Transverse colon (tissue), 4 donors: ENCODE measurements at regions of chr22 and their contacts with region 1.

Region 1: GRCh38 chr22:36144886-36145541 is 15.5 kb downstream of the APOL3 start:
- DNase-seq: peak; percentile 52
- H3K4me3 ChIP-seq: no peak overlapping the region
- H3K27ac ChIP-seq: peak overlapping the region in 1 of 4 donors; percentile 6
- H3K4me1 ChIP-seq: peaks cover 0 to 11% (median 3%) of the 10 kb centered on the region in 4 donors
- H3K27me3 ChIP-seq: no peaks in the 10 kb centered on the region
- CTCF ChIP-seq: peak; percentile 64 to 72 (median 70)
- EP300 ChIP-seq: no peak
- POLR2A ChIP-seq: no peak

Region 2: DNA sequence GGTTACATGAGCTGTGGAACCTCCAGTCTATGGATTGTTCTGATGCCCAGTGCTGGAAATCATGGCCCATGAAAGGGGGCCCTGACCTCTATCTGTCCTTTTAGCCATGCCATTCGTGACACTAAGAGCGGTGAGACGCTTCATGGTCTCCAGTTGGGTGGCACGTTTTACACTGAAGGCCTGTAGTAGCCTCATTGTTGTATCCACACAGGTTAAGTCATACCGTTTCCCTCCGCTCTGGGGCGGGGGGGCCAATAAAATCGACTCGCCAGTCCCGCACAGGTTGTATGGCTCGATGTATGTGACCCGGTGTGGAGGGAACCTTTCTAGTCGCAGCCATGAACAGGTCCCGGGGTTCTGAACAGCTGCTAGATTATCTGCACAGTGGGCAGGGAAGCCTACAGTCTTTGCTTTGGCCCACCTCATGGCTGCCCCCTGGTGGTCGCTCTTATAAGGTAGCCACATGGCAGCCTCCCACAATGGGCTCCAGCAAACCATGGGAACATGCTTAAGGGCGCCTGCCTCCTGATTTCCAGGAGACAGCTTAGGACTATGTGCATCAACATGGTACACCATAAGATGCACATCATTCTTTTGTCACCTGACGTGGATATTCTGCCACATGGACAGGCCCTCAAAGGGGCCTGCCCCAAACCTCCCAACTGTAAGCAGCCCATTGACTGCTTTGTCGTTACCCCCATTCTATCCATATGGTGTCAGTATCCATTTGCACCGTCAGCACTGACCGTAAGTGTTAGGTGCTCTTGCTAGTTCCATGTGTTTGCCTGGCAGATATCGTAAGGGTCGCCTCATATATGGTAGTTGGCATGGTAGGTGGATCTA is 35.2 kb after region 1 on chr22:
- in situ Hi-C with region 1: loop called in 1 of 4 experiments (anchors 5 kb)
- intact Hi-C with region 1: loop called (anchors 2 kb)
- DNase-seq: peak; percentile 87
- H3K4me3 ChIP-seq: no peak overlapping the region
- H3K27ac ChIP-seq: no peak overlapping the region
- H3K4me1 ChIP-seq: no peaks in the 10 kb centered on the region
- H3K27me3 ChIP-seq: no peaks in the 10 kb centered on the region
- CTCF ChIP-seq: peak; percentile 79 to 91 (median 90)
- EP300 ChIP-seq: no peak
- POLR2A ChIP-seq: no peak

Region 3: GRCh38 chr22:36486619-36487384 is 341.8 kb after region 1 on chr22:
- in situ Hi-C with region 1: no loop called
- intact Hi-C with region 1: loop called (anchors 5 kb)
- DNase-seq: peak; percentile 58
- H3K4me3 ChIP-seq: no peak overlapping the region
- H3K27ac ChIP-seq: no peak overlapping the region
- H3K4me1 ChIP-seq: peaks cover 0 to 6% (median 3%) of the 10 kb centered on the region in 4 donors
- H3K27me3 ChIP-seq: no peaks in the 10 kb centered on the region
- CTCF ChIP-seq: peak; percentile 61 to 78 (median 71)
- EP300 ChIP-seq: no peak
- POLR2A ChIP-seq: no peak